ENCODE measurements at regions of chr20 and their contacts with region 1.

Region 1: DNA sequence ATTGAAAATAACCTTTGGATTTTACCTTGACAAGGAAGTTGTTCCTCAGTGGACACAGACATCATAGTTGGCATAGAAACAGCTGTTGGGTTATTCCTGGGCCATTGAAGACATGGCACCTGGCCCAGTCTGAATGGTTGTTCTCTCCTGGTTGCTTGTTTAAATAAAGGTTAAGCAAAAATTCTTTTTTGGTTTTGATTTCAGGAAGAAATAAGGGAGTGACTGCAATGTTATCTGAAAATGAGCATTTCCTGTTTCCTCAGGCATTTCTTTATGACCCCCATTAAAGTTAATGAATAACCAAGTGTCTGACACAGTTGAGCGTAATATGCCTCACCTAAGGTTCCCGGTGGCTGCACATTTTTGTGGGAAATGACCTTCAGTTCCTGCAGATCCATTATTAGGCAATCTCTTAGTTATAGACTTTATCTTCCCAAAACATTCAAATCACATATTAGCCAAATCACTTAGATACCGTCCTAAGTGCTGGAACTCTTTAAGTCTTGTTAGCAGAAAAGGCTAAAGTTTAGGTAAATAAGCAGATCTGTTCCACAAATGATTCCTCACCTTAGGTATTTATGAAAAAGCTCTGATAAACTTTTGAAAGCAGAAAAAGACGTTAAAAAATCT is 648.7 kb upstream of the FLRT3 start:
- DNase-seq: peak; percentile 99
- ATAC-seq: peak; percentile 63
- H3K4me3 ChIP-seq: peak overlapping the region in 1 of 3 experiments; percentile 32; a peak in 1 of 6 replicates
- H3K27ac ChIP-seq: peak overlapping the region; percentile 95
- H3K4me1 ChIP-seq: peaks cover 80% of the 10 kb centered on the region
- H3K27me3 ChIP-seq: no peaks in the 10 kb centered on the region
- CTCF ChIP-seq: no peak
- EP300 ChIP-seq: peak; percentile 59 to 94; a peak in 3 of 4 replicates
- POLR2A ChIP-seq: peak in 1 of 2 experiments; percentile 22; a peak in 1 of 4 replicates
- RAD21 ChIP-seq: no peak

Region 2: DNA sequence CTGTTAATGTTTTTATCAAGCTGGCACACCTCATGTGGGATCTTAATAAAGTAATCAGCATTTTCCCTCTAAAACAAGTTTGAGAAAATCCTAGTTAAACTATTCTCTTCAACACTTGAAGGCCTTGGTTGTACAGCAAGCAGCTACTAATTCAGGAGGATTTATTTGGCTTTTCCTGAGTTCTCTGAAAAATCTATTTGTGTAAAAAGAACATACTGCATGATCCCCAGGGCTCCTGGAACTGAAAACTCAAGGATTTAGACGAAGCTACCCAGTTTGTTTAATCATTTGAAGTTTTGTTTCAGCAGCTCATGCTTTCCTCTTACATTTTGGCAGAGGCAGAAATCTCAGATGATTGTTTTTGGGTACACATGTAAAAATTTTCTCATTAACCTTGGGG is 339.1 kb before region 1 on chr20:
- CTCF ChIA-PET with region 1: no interaction called
- POLR2A ChIA-PET with region 1: no interaction called
- in situ Hi-C with region 1: no loop called
- intact Hi-C with region 1: no loop called
- DNase-seq: no peak
- ATAC-seq: no peak
- H3K4me3 ChIP-seq: no peak overlapping the region
- H3K27ac ChIP-seq: no peak overlapping the region
- H3K4me1 ChIP-seq: no peaks in the 10 kb centered on the region
- H3K27me3 ChIP-seq: no peaks in the 10 kb centered on the region
- CTCF ChIP-seq: no peak
- EP300 ChIP-seq: no peak
- POLR2A ChIP-seq: no peak
- RAD21 ChIP-seq: no peak

Region 3: DNA sequence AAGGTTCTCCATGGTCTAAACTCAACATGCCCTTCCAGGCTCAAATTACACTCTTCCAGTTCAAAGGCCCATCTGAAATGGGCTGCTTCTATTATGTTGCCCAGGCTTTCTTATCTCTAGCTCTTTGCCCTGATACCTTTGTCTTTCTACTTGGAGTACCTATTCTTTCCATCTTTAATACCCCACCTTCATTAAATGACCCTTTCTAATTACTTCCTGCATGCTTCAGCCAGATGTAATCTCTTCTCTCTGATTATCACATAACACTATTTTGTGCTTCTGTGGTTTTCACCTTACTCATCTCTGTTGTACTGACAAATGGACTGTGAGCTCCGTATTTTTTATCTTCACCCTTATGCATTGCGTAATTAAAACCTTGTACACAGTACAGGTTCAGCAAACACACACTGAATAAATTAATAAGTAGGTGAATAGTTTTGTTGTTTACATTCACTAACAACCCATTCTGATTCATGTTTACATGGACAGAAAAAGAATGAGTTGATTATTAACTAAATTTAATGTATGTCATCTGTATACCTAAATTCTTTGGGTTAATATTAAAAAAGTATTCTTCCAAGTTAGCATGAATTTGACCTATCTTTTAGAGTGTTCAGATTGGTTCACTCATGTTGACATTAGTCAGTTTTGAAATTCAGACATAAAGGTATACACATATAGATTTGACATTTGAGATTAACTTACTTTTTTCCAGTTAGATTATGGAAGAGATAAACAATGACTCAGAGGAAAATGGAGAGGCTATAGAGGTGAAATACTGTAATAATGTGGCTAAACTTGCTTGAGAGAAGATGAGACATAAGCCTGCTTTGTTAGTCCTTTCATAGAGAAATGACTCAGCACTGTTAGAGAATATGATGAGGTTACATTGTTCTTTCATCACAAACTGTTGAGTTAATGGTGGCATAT is 107.1 kb before region 1 on chr20:
- CTCF ChIA-PET with region 1: no interaction called
- POLR2A ChIA-PET with region 1: interaction called, 3 read pairs
- in situ Hi-C with region 1: no loop called
- intact Hi-C with region 1: loop called (anchors 1 kb)
- DNase-seq: peak; percentile 83
- ATAC-seq: peak; percentile 85
- H3K4me3 ChIP-seq: no peak overlapping the region; a peak in 1 of 6 replicates
- H3K27ac ChIP-seq: peak overlapping the region; percentile 1
- H3K4me1 ChIP-seq: peaks cover 18% of the 10 kb centered on the region
- H3K27me3 ChIP-seq: no peaks in the 10 kb centered on the region
- CTCF ChIP-seq: no peak
- EP300 ChIP-seq: peak in 1 of 2 experiments; percentile 71; a peak in 2 of 4 replicates
- POLR2A ChIP-seq: no peak
- RAD21 ChIP-seq: no peak

Region 4: GRCh38 chr20:14915356-14915755 is 70.8 kb before region 1 on chr20:
- CTCF ChIA-PET with region 1: no interaction called
- POLR2A ChIA-PET with region 1: no interaction called
- in situ Hi-C with region 1: no loop called
- intact Hi-C with region 1: no loop called
- DNase-seq: no peak
- ATAC-seq: no peak
- H3K4me3 ChIP-seq: no peak overlapping the region
- H3K27ac ChIP-seq: no peak overlapping the region
- H3K4me1 ChIP-seq: no peaks in the 10 kb centered on the region
- H3K27me3 ChIP-seq: peaks cover 0 to 9% of the 10 kb centered on the region in 2 experiments; a peak in 1 of 5 replicates
- CTCF ChIP-seq: no peak
- EP300 ChIP-seq: no peak
- POLR2A ChIP-seq: no peak
- RAD21 ChIP-seq: no peak

Region 5: DNA sequence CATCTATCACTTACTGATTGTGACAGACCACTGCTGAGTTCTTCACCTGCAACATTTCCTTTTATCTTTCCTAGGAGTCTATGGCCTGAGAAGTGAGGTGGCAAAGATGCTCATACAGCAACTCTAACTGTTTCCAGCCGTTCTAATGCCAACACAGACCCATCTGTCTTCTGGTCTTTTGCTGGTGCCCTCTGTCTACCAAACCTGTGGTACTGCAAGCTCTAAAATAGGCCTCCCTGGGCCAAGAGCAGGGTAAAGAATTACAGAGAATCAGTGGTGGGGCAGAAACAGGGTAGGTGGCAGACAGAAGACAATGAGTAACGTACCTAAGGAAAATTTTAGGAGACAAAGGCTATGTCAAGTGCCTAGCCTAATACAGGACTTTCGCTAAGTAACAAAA is 37.7 kb before region 1 on chr20:
- CTCF ChIA-PET with region 1: no interaction called
- POLR2A ChIA-PET with region 1: interaction called, 11 read pairs
- in situ Hi-C with region 1: no loop called
- intact Hi-C with region 1: no loop called
- DNase-seq: peak; percentile 34
- ATAC-seq: peak; percentile 83
- H3K4me3 ChIP-seq: no peak overlapping the region
- H3K27ac ChIP-seq: no peak overlapping the region
- H3K4me1 ChIP-seq: peaks cover 8% of the 10 kb centered on the region; the same call in 1 of the 2 replicates
- H3K27me3 ChIP-seq: peaks cover 0 to 2% of the 10 kb centered on the region in 2 experiments; a peak in 1 of 5 replicates
- CTCF ChIP-seq: peak; percentile 44
- EP300 ChIP-seq: no peak
- POLR2A ChIP-seq: no peak
- RAD21 ChIP-seq: no peak

Region 6: GRCh38 chr20:15061955-15062354 is 75.8 kb after region 1 on chr20:
- CTCF ChIA-PET with region 1: no interaction called
- POLR2A ChIA-PET with region 1: interaction called, 59 read pairs
- in situ Hi-C with region 1: loop called (anchors 5 kb)
- intact Hi-C with region 1: loop called (anchors 1 kb)
- DNase-seq: peak; percentile 97
- ATAC-seq: peak; percentile 95
- H3K4me3 ChIP-seq: peak overlapping the region in 2 of 3 experiments; percentile 7 to 20; a peak in 2 of 6 replicates
- H3K27ac ChIP-seq: peak overlapping the region; percentile 64
- H3K4me1 ChIP-seq: peaks cover 44% of the 10 kb centered on the region
- H3K27me3 ChIP-seq: no peaks in the 10 kb centered on the region
- CTCF ChIP-seq: peak; percentile 42; the same call in 1 of the 2 replicates
- EP300 ChIP-seq: peak; percentile 90 to 91
- POLR2A ChIP-seq: peak; percentile 22 to 26; a peak in 1 of 4 replicates
- RAD21 ChIP-seq: 0 out of 2 replicates have a peak, but pooled peaks have one; percentile 26

Region 7: GRCh38 chr20:15155848-15156401 is 169.8 kb after region 1 on chr20:
- CTCF ChIA-PET with region 1: no interaction called
- POLR2A ChIA-PET with region 1: interaction called, 6 read pairs
- in situ Hi-C with region 1: no loop called
- intact Hi-C with region 1: loop called (anchors 10 kb)
- DNase-seq: no peak
- ATAC-seq: no peak
- H3K4me3 ChIP-seq: no peak overlapping the region
- H3K27ac ChIP-seq: no peak overlapping the region
- H3K4me1 ChIP-seq: peaks cover 17% of the 10 kb centered on the region
- H3K27me3 ChIP-seq: no peaks in the 10 kb centered on the region; a peak in 1 of 5 replicates
- CTCF ChIP-seq: no peak
- EP300 ChIP-seq: no peak
- POLR2A ChIP-seq: no peak
- RAD21 ChIP-seq: no peak

Region 8: GRCh38 chr20:16729565-16730456 is 1743.7 kb after region 1 on chr20 and contains the start of gene SNRPB2:
- CTCF ChIA-PET with region 1: no interaction called
- POLR2A ChIA-PET with region 1: no interaction called
- in situ Hi-C with region 1: no loop called
- intact Hi-C with region 1: loop called (anchors 10 kb)
- DNase-seq: peak; percentile 97
- ATAC-seq: peak; percentile 98
- H3K4me3 ChIP-seq: peak within 1 kb of the TSS; percentile 82 to 98 (median 92)
- H3K27ac ChIP-seq: peak within 1 kb of the TSS; percentile 79
- H3K4me1 ChIP-seq: peaks cover 29% of the 10 kb centered on the region
- H3K27me3 ChIP-seq: peaks cover 0 to 12% of the 10 kb centered on the region in 2 experiments; a peak in 3 of 5 replicates
- CTCF ChIP-seq: peak; percentile 35
- EP300 ChIP-seq: peak; percentile 66 to 75; a peak in 3 of 4 replicates
- POLR2A ChIP-seq: peak; percentile 97 to 98
- RAD21 ChIP-seq: peak; percentile 74
- total RNA-seq, gene SNRPB2: 204 and 278 TPM in 2 replicates

Measured in HepG2 (cell line).